PC-3 (cell line): ENCODE measurements at regions of chr13 and their contacts with region 1.

Region 1: GRCh38 chr13:41905600-41906254 is 55.2 kb downstream of the VWA8 start:
- DNase-seq: peak; percentile 54
- ATAC-seq: peak; percentile 85
- H3K4me3 ChIP-seq: no peak overlapping the region
- H3K27ac ChIP-seq: no peak overlapping the region
- H3K4me1 ChIP-seq: no peaks in the 10 kb centered on the region
- H3K27me3 ChIP-seq: no peaks in the 10 kb centered on the region
- CTCF ChIP-seq: peak; percentile 72

Region 2: DNA sequence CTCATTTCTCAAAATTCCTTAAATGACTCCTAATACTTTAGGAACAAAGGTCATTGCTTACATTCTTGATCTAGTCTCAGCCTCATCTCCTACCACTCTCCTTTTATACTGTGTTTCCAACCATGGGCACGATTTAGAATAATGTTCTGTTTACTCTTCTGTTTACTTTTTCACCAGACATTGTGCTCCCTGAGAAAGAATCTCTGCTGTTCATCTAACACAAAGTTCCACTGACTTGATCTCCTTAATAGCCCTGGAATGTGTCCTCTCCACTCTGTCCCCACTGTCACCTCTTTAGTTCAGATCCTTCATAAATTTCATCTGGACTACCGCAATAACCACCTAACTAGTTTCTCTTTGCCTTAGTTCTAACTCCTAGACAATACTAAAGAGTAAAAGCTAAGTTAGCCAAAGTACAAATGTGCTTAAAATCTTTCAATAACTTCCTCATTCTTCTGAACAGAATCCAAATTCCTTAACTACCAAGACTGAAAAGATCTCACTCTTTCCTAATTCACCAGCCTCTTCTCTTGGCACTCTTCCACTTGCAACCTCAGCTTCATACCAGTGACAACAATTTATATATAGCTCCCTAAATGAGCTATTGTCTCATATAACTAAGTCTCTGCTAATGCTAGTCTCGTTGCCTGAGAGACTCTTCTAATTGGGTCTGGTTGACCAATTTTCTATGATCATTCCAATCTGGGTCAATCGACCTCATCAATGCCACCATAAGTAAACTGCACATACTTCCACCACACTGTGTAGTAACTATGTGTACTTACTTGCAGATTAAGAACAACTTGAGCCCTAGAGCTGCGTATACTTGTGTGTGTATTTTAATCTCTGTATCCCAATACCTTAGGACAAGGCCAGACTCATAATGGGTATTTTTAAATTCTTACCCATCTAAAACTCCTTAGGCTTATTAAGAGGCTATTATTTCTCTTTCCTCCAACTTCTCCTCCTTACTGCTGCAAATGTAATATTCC is 124.7 kb before region 1 on chr13:
- CTCF ChIA-PET with region 1: no interaction called
- POLR2A ChIA-PET with region 1: no interaction called
- intact Hi-C with region 1: no loop called
- DNase-seq: no peak
- ATAC-seq: no peak
- H3K4me3 ChIP-seq: no peak overlapping the region
- H3K27ac ChIP-seq: no peak overlapping the region
- H3K4me1 ChIP-seq: no peaks in the 10 kb centered on the region
- H3K27me3 ChIP-seq: no peaks in the 10 kb centered on the region
- CTCF ChIP-seq: no peak

Region 3: DNA sequence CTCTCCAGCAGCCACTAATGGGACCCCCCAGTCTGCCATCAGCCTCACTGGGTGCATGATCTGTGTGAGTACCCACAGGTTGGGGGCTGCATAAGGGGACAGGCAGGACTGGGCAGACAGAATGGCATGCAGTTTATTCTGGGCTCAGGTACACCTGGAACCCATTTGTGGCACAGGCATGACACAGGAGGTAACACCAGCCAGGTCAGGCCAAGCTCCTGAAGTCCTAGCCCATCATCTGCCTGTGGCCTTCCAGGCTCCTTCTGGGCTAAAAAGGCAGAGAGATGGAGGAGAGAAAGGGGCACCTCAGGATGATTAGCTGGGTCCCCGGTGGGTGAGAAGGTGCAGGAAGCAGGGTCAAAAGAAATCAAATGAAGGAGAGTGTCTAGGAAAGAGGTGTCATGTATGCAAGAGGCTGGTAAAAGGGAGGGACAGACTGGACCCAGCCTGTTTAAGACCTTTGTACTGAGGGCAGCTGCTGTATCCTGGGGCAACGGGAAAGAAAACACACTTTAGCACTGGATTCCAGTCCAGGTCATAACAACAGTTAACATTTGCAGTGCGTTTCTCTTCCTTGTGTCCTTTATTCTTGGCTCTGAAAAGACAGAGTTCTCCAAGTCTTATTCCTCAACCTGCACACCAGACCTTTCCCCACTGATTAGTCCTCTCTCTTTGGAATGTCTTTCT is 122.5 kb after region 1 on chr13:
- CTCF ChIA-PET with region 1: no interaction called
- POLR2A ChIA-PET with region 1: no interaction called
- intact Hi-C with region 1: loop called (anchors 5 kb)
- DNase-seq: no peak
- ATAC-seq: no peak
- H3K4me3 ChIP-seq: no peak overlapping the region
- H3K27ac ChIP-seq: no peak overlapping the region
- H3K4me1 ChIP-seq: peaks cover 32% of the 10 kb centered on the region
- H3K27me3 ChIP-seq: no peaks in the 10 kb centered on the region
- CTCF ChIP-seq: no peak

Region 4: DNA sequence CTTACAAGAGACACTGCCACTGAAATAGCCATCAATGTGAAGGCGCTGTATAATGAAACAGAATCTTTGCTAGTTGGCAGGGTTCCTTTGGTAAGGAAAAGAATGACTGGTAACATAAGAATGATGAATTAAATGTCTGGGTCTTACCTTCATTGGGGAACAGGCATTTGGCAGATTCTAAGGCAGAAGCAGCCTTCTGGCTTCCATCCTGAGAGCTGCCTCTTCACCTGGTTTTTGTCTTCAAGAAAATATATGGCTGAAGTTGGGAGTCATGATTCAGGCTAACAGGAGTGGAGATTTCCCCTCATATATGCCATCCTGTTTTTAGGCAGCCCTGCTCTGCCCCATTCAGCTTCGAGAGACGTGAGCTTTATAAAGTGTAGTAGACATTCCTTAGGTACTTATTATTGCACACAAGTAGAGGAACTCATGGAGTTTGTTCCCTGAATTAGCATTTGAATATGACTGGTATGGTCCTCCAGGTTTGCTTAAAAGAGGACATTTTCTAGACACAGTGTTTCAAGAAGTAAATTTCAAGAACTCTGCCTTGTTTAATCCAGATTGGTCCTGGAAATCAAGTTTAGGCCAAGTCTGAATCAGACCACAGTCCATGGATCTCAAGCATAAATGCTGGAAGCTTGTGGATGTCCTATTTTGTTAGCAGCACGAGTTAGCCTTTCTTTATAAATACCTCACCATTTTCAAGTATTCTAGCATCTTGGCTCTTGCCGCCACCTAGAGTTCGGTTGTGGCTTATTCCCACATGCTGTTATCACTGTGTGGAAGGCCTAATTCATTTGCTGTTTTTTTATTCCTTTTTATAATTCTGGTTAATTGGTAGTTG is 310.1 kb after region 1 on chr13:
- CTCF ChIA-PET with region 1: no interaction called
- POLR2A ChIA-PET with region 1: no interaction called
- intact Hi-C with region 1: loop called (anchors 5 kb)
- DNase-seq: peak; percentile 53
- ATAC-seq: peak; percentile 80
- H3K4me3 ChIP-seq: no peak overlapping the region
- H3K27ac ChIP-seq: no peak overlapping the region
- H3K4me1 ChIP-seq: peaks cover 20% of the 10 kb centered on the region
- H3K27me3 ChIP-seq: no peaks in the 10 kb centered on the region
- CTCF ChIP-seq: peak; percentile 77